ENCODE measurements at regions of chr22 and their contacts with region 1.

Region 1: DNA sequence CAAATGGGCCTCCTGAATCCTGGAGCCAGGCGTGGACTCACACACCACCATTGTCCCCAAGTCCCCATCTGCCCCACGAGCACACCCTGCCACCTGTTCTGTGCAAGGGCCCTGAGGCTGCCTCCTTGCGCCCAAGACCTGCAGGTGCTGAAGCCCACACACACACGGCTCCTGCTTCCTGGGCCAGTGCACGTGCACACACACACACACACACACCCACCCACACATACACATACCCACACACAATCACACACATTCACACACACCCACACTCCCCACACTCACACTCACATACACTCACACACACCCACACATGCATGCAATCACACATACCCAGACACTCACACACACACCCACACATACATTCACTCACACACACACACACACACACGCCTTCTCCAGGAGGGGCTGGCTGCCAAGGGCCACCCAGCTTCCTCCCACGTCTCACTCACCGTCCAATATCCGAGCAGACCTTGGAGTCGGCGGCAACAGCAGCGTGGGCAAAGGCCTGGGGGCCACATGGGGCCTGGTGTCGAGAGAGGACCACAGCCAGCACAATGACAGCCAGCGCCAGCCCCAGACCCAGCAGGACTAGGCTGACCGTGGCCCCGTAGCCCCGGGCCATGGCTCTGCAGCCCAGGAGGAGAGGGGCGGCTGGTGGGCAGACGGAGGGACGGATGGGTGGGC is 638 bp downstream of the GGT5 start:
- DNase-seq: no peak
- H3K4me3 ChIP-seq: no peak overlapping the region
- H3K4me3 Mint-ChIP-seq: no peak overlapping the region
- H3K27ac Mint-ChIP-seq: no peak overlapping the region
- H3K4me1 ChIP-seq: 0 out of 2 replicates have a peak, but pooled peaks cover 3% of the 10 kb centered on the region
- H3K4me1 Mint-ChIP-seq: peaks cover 13% of the 10 kb centered on the region
- H3K27me3 ChIP-seq: no peaks in the 10 kb centered on the region
- H3K27me3 Mint-ChIP-seq: no peaks in the 10 kb centered on the region
- CTCF ChIP-seq: no peak

Region 2: GRCh38 chr22:24043958-24044357 is 200.3 kb before region 1 on chr22:
- CTCF ChIA-PET with region 1: no interaction called
- POLR2A ChIA-PET with region 1: no interaction called
- intact Hi-C with region 1: no loop called
- DNase-seq: no peak
- H3K4me3 ChIP-seq: no peak overlapping the region
- H3K4me3 Mint-ChIP-seq: no peak overlapping the region
- H3K27ac Mint-ChIP-seq: peak overlapping the region; percentile 27
- H3K4me1 ChIP-seq: peaks cover 10% of the 10 kb centered on the region; the same call in 1 of the 2 replicates
- H3K4me1 Mint-ChIP-seq: peaks cover 7% of the 10 kb centered on the region
- H3K27me3 ChIP-seq: no peaks in the 10 kb centered on the region
- H3K27me3 Mint-ChIP-seq: no peaks in the 10 kb centered on the region
- CTCF ChIP-seq: no peak

Region 3: DNA sequence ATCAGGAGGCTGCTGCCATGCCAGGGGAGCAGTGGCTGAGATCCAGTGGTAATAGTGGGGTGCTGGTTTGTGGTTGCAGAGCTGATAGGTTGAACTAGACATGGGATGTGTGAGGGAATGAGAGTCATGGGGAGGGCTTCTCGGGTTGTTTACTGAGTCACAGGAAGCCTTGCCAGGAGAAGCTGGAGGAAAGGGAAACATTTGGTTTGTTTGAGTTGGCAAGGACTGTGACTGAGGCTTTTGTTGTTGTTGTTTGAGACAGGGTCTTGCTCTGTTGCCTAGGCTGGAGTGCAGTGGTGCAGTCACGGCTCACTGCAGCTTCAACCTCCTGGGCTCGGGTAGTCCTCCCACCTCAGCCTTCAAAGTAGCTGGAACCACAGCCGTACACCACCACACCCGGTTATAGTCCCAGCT is 183.9 kb before region 1 on chr22:
- CTCF ChIA-PET with region 1: no interaction called
- POLR2A ChIA-PET with region 1: no interaction called
- intact Hi-C with region 1: no loop called
- DNase-seq: no peak
- H3K4me3 ChIP-seq: no peak overlapping the region
- H3K4me3 Mint-ChIP-seq: no peak overlapping the region
- H3K27ac Mint-ChIP-seq: no peak overlapping the region
- H3K4me1 ChIP-seq: no peaks in the 10 kb centered on the region
- H3K4me1 Mint-ChIP-seq: no peaks in the 10 kb centered on the region
- H3K27me3 ChIP-seq: no peaks in the 10 kb centered on the region
- H3K27me3 Mint-ChIP-seq: no peaks in the 10 kb centered on the region
- CTCF ChIP-seq: no peak

Region 4: DNA sequence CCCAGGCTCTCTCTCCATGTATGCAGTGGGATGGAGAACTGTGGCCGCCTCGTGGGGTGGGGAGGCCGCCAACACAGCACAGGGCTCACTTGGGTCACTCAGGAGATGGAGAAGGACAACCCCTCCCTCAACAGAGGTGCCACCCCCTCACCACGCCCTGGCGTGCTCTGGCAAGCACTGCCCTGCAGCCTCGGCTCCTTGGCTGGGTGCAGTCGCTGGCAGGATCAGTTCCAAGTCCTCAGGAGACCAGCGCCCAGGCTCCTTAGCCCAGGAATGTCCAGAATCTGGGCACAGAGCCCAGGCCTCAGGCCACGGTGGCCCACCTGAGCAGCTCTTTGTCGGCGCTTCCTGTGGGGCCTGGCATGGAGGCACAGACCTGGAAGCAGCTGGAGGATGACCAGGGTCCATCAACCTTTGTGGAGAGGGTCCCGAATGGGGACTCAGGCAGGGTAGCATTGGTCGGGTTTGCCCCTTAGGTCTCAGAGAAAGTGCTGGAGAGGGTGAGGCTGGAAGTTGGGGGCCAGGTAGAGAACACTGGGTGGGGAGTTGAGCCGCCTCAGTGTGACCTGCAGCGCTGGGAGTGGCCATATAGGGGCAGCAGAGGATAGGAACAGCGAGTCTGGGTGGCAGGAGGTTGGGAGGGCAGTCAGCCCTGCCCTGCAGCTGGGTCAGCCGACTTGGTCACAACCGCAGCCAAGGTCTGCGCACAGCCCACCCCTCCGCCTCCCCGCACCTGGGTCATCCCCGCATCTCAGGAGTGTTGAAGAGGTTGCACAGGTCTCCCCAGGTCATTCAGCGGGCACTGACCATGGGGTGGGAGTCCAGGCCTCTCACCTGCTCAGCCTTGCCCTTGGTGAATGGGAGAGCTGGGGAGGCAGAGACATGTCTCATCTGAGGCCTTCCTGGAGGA is 54.7 kb before region 1 on chr22:
- CTCF ChIA-PET with region 1: interaction called, 51 read pairs
- POLR2A ChIA-PET with region 1: no interaction called
- intact Hi-C with region 1: loop called (anchors 1 kb)
- DNase-seq: peak; percentile 69 to 81
- H3K4me3 ChIP-seq: no peak overlapping the region
- H3K4me3 Mint-ChIP-seq: no peak overlapping the region
- H3K27ac Mint-ChIP-seq: peak overlapping the region; percentile 60
- H3K4me1 ChIP-seq: peaks cover 18% of the 10 kb centered on the region; the same call in 1 of the 2 replicates
- H3K4me1 Mint-ChIP-seq: peaks cover 25% of the 10 kb centered on the region
- H3K27me3 ChIP-seq: no peaks in the 10 kb centered on the region
- H3K27me3 Mint-ChIP-seq: no peaks in the 10 kb centered on the region
- CTCF ChIP-seq: peak; percentile 88 to 93

Region 5: GRCh38 chr22:24208012-24208749 is 36.1 kb before region 1 on chr22:
- CTCF ChIA-PET with region 1: interaction called, 4 read pairs
- POLR2A ChIA-PET with region 1: no interaction called
- intact Hi-C with region 1: loop called (anchors 5 kb)
- DNase-seq: peak in 1 of 2 experiments; percentile 64
- H3K4me3 ChIP-seq: no peak overlapping the region
- H3K4me3 Mint-ChIP-seq: peak overlapping the region; percentile 35
- H3K27ac Mint-ChIP-seq: peak overlapping the region; percentile 97
- H3K4me1 ChIP-seq: peaks cover 52% of the 10 kb centered on the region
- H3K4me1 Mint-ChIP-seq: peaks cover 35% of the 10 kb centered on the region
- H3K27me3 ChIP-seq: no peaks in the 10 kb centered on the region
- H3K27me3 Mint-ChIP-seq: no peaks in the 10 kb centered on the region
- CTCF ChIP-seq: no peak

Region 6: GRCh38 chr22:24402460-24403192 is 158.4 kb after region 1 on chr22:
- CTCF ChIA-PET with region 1: no interaction called
- POLR2A ChIA-PET with region 1: no interaction called
- intact Hi-C with region 1: no loop called
- DNase-seq: no peak
- H3K4me3 ChIP-seq: no peak overlapping the region
- H3K4me3 Mint-ChIP-seq: no peak overlapping the region
- H3K27ac Mint-ChIP-seq: no peak overlapping the region
- H3K4me1 ChIP-seq: no peaks in the 10 kb centered on the region
- H3K4me1 Mint-ChIP-seq: peaks cover 11% of the 10 kb centered on the region
- H3K27me3 ChIP-seq: no peaks in the 10 kb centered on the region
- H3K27me3 Mint-ChIP-seq: no peaks in the 10 kb centered on the region
- CTCF ChIP-seq: no peak

Measured in Caco-2 (cell line).